B cell (primary cell): ENCODE measurements at regions of chr12 and their contacts with region 1.

Region 1: DNA sequence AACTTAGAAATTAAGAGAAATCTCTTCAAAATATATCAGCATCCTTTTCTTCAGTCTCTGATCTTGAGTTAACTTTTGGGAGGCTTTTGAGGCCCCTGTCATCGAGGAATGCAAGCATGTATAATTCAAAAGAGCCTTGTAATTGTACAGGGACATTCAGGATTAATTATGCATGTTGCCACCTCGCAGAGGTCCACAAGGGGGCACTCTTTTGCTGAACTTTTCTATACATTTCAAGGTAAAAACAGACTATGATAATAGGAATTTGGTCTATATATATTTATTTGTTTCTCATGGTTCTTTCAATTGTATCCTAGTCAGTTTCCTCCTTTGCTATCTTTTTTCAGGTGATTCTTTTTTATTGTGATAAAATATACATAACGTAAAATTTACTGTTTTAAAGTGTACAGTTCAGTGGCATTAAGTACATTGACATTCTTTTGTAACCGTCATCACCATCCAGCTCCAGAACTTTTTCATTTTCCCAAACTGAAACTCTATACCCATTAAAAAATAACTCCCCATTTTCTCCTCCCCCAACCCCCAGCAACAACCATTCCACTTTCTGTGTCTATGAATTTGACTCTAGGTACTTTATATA is 47.0 kb upstream of the SLC2A13 start:
- DNase-seq: peak; percentile 78
- ATAC-seq: peak; percentile 78
- H3K4me3 ChIP-seq: no peak overlapping the region
- H3K4me3 Mint-ChIP-seq: no peak overlapping the region
- H3K27ac ChIP-seq: no peak overlapping the region
- H3K27ac Mint-ChIP-seq: no peak overlapping the region
- H3K4me1 ChIP-seq: peaks cover 23 to 26% of the 10 kb centered on the region in 2 donors
- H3K4me1 Mint-ChIP-seq: peaks cover 42% of the 10 kb centered on the region
- H3K27me3 ChIP-seq: no peaks in the 10 kb centered on the region
- H3K27me3 Mint-ChIP-seq: no peaks in the 10 kb centered on the region
- CTCF ChIP-seq: peak; percentile 96

Region 2: DNA sequence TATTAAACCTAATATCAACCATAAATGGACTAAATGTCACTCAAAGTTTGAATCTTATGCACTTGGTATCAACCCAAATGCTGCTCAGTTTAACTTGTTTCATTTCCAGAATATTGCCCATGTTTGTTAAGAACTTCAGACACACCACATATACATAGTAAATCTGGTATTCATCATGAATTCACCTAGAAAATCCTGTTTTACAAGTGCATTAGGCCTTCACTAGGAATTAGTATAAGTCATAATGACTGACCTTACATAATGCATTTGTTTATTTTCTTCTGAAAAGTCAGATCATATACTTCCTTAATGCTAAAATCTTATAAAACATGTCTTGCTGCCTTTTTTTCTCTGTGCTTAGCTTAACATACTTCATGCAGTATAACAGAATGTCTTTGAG is 599.4 kb before region 1 on chr12:
- CTCF ChIA-PET with region 1: no interaction called
- POLR2A ChIA-PET with region 1: no interaction called
- intact Hi-C with region 1: no loop called
- DNase-seq: no peak
- ATAC-seq: no peak
- H3K4me3 ChIP-seq: no peak overlapping the region
- H3K4me3 Mint-ChIP-seq: no peak overlapping the region
- H3K27ac ChIP-seq: no peak overlapping the region
- H3K27ac Mint-ChIP-seq: no peak overlapping the region
- H3K4me1 ChIP-seq: no peaks in the 10 kb centered on the region
- H3K4me1 Mint-ChIP-seq: no peaks in the 10 kb centered on the region
- H3K27me3 ChIP-seq: no peaks in the 10 kb centered on the region
- H3K27me3 Mint-ChIP-seq: no peaks in the 10 kb centered on the region
- CTCF ChIP-seq: no peak

Region 3: GRCh38 chr12:40086471-40086870 is 66.4 kb before region 1 on chr12:
- CTCF ChIA-PET with region 1: no interaction called
- POLR2A ChIA-PET with region 1: no interaction called
- intact Hi-C with region 1: no loop called
- DNase-seq: no peak
- ATAC-seq: no peak
- H3K4me3 ChIP-seq: no peak overlapping the region
- H3K4me3 Mint-ChIP-seq: no peak overlapping the region
- H3K27ac ChIP-seq: no peak overlapping the region
- H3K27ac Mint-ChIP-seq: no peak overlapping the region
- H3K4me1 ChIP-seq: no peaks in the 10 kb centered on the region
- H3K4me1 Mint-ChIP-seq: no peaks in the 10 kb centered on the region
- H3K27me3 ChIP-seq: no peaks in the 10 kb centered on the region
- H3K27me3 Mint-ChIP-seq: no peaks in the 10 kb centered on the region
- CTCF ChIP-seq: no peak

Region 4: GRCh38 chr12:40168868-40169267 is 16.0 kb after region 1 on chr12:
- CTCF ChIA-PET with region 1: interaction called, 5 read pairs
- POLR2A ChIA-PET with region 1: no interaction called
- intact Hi-C with region 1: loop called (anchors 2 kb)
- DNase-seq: peak; percentile 51
- ATAC-seq: peak; percentile 67
- H3K4me3 ChIP-seq: peak overlapping the region in 3 of 5 experiments; percentile 8 to 31 (median 22)
- H3K4me3 Mint-ChIP-seq: peak overlapping the region; percentile 80
- H3K27ac ChIP-seq: no peak overlapping the region
- H3K27ac Mint-ChIP-seq: peak overlapping the region; percentile 68
- H3K4me1 ChIP-seq: peaks cover 11% of the 10 kb centered on the region in 2 donors
- H3K4me1 Mint-ChIP-seq: peaks cover 26% of the 10 kb centered on the region
- H3K27me3 ChIP-seq: no peaks in the 10 kb centered on the region
- H3K27me3 Mint-ChIP-seq: no peaks in the 10 kb centered on the region
- CTCF ChIP-seq: no peak

Region 5: DNA sequence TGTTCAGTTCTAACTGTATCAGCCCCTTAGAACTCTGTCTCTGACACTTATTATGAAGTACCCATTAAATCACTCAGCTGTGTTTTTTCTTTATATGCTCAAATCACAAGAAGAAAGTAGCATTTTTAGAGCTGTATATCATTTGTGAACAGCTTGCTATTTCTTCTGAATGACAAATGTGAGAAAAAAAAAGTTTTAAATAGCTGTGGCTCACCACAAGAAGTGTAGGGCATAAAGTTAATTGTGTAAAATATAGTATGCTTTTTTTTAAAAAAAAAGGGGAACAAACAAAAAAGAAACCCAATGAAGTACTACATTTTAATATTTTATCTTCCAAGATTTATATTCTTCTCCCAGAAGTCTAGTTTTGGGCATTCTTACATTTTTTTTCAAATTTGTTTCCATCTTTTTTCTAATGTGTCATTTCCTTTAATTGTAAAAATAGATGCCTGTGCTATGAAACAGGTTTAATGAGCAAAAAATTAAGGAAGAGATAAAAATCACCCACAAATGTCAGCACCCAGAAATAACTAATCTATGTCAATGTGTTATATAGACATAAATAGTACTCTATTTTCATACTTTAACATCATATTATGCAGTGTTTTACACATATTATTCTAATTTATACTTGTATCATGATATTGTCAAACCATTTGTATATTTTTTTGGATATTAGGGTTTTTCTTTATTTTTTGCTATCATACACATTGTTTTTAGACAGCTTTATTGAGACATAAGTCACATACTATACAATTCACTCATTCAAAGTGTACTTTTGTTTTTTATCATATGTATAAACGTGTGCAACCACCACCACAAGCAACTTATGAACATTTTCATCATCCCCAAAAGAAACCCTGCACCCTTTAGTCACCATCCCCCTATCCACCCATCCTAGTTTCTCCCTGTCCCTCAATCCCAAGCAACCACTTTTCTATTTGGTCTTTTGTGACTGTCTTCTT is 49.5 kb after region 1 on chr12:
- CTCF ChIA-PET with region 1: interaction called, 11 read pairs
- POLR2A ChIA-PET with region 1: no interaction called
- intact Hi-C with region 1: no loop called
- DNase-seq: peak; percentile 40
- ATAC-seq: peak; percentile 24
- H3K4me3 ChIP-seq: peak overlapping the region in 1 of 5 experiments; percentile 30
- H3K4me3 Mint-ChIP-seq: peak overlapping the region; percentile 48
- H3K27ac ChIP-seq: peak overlapping the region; percentile 4 to 62
- H3K27ac Mint-ChIP-seq: peak overlapping the region; percentile 59
- H3K4me1 ChIP-seq: peaks cover 6 to 15% of the 10 kb centered on the region in 2 donors
- H3K4me1 Mint-ChIP-seq: peaks cover 24% of the 10 kb centered on the region
- H3K27me3 ChIP-seq: no peaks in the 10 kb centered on the region
- H3K27me3 Mint-ChIP-seq: no peaks in the 10 kb centered on the region
- CTCF ChIP-seq: no peak

Region 6: DNA sequence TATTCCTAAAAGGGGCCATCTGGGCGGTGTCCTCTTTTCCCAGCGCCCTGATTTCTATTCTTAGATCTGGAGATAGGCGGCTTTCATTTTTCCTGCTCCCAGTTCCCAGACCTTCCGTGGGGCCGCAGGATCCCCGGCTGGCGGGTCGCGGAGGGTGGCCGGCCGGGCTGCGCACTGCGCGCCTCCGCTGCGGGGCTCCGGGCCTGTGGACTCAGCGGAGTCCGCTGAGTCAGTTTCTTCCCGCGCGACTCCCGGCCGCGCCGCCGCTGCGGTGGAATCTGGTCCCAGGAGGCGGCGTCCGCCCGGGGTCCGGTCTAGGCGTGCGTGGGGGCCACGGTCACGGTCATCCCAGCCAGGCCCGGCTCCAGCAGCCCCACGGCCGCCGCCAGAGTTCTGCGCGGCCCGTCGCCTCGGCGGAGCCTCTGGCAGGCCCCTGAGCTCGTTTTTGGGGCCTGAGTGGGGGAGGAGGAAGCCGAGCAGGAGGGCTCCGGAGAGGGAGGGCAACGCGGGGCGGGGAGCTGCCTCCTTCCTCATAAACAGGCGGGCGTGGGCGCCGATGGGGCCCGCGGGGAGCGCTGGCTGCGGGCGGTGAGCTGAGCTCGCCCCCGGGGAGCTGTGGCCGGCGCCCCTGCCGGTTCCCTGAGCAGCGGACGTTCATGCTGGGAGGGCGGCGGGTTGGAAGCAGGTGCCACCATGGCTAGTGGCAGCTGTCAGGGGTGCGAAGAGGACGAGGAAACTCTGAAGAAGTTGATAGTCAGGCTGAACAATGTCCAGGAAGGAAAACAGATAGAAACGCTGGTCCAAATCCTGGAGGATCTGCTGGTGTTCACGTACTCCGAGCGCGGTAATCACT is 71.8 kb after region 1 on chr12 and contains the start of gene LRRK2:
- CTCF ChIA-PET with region 1: interaction called, 11 read pairs
- POLR2A ChIA-PET with region 1: interaction called, 6 read pairs
- intact Hi-C with region 1: loop called (anchors 1 kb)
- DNase-seq: peak; percentile 94
- ATAC-seq: peak; percentile 81
- H3K4me3 ChIP-seq: peak within 1 kb of the TSS; percentile 63 to 99 (median 76)
- H3K4me3 Mint-ChIP-seq: peak within 1 kb of the TSS; percentile 94
- H3K27ac ChIP-seq: peak within 1 kb of the TSS; percentile 80 to 98
- H3K27ac Mint-ChIP-seq: peak within 1 kb of the TSS; percentile 97
- H3K4me1 ChIP-seq: peaks cover 36 to 46% of the 10 kb centered on the region in 2 donors
- H3K4me1 Mint-ChIP-seq: peaks cover 61% of the 10 kb centered on the region
- H3K27me3 ChIP-seq: no peaks in the 10 kb centered on the region
- H3K27me3 Mint-ChIP-seq: no peaks in the 10 kb centered on the region
- CTCF ChIP-seq: peak; percentile 9
- total RNA-seq, gene LRRK2: 56.5 and 60.2 TPM in 2 replicates

Region 7: DNA sequence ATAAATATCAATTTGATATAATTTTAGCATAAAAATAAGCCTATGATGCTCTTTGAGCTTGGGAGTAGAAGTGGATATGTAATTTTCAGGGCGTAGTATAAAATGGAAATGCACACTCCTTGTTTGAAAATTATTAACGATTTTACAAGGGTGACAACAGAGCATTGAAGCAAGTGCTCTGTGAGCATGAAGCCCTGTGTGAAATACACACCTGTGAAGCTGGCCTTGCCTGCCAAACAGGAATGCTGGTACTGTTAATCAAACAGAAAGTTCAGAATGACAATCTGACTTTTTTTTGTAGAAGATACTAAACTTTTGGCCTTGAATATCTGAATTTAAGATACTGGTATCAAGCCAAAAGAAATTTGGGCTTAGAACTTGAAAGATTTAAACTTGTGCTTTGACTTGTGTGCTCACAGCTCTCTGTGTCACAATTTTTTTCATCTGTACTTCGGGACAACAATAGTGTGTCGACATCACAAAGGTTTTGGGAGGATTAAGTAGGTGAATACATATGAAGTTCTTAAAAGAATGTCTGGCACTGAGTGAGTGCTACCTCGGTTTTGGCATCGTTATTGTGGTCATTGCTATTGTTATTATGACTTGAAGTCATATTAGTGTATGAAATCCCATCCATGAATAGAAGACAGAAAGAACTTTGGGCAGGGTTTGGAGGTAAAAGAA is 119.2 kb after region 1 on chr12:
- CTCF ChIA-PET with region 1: interaction called, 31 read pairs
- POLR2A ChIA-PET with region 1: no interaction called
- intact Hi-C with region 1: no loop called
- DNase-seq: no peak
- ATAC-seq: no peak
- H3K4me3 ChIP-seq: no peak overlapping the region
- H3K4me3 Mint-ChIP-seq: no peak overlapping the region
- H3K27ac ChIP-seq: no peak overlapping the region
- H3K27ac Mint-ChIP-seq: no peak overlapping the region
- H3K4me1 ChIP-seq: no peaks in the 10 kb centered on the region
- H3K4me1 Mint-ChIP-seq: peaks cover 2% of the 10 kb centered on the region
- H3K27me3 ChIP-seq: no peaks in the 10 kb centered on the region
- H3K27me3 Mint-ChIP-seq: no peaks in the 10 kb centered on the region
- CTCF ChIP-seq: no peak

Region 8: DNA sequence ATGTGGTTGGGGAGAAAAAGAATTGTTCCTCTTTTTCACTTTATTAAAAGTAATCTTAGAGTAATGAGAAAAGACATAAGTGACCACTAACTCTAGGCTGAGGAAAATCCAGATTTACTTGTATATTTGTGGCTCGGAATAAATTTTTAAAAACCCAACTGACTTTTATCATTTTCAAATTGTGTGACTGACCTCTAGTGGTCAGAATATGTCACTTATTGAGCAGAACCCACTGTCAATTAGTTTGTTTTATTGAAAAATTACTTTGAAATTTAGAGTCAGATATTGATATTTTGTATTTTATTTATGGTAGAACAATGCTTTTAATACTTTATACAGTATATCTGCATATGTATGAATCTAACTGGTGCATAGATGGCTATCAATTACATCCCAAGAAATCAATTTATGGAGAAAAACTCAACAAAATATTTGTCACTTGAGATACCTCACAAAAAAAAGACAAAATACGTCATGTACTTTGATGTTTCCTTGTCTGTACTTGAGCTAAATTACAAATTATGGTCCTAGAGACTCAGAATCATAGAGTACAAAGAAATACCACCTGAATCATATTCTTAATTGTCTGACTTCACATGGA is 768.8 kb after region 1 on chr12:
- CTCF ChIA-PET with region 1: no interaction called
- POLR2A ChIA-PET with region 1: no interaction called
- intact Hi-C with region 1: loop called (anchors 10 kb)
- DNase-seq: peak; percentile 12
- ATAC-seq: no peak
- H3K4me3 ChIP-seq: no peak overlapping the region
- H3K4me3 Mint-ChIP-seq: no peak overlapping the region
- H3K27ac ChIP-seq: no peak overlapping the region
- H3K27ac Mint-ChIP-seq: no peak overlapping the region
- H3K4me1 ChIP-seq: no peaks in the 10 kb centered on the region
- H3K4me1 Mint-ChIP-seq: no peaks in the 10 kb centered on the region
- H3K27me3 ChIP-seq: no peaks in the 10 kb centered on the region
- H3K27me3 Mint-ChIP-seq: peaks cover 7% of the 10 kb centered on the region
- CTCF ChIP-seq: peak; percentile 82